WTC11 (cell line): ENCODE measurements at regions of chr10 and their contacts with region 1.

Region 1: GRCh38 chr10:84537447-84537931 is 209.1 kb downstream of the CCSER2 start:
- DNase-seq: peak; percentile 32
- ATAC-seq: peak; percentile 35
- H3K4me3 Mint-ChIP-seq: no peak overlapping the region
- H3K27ac Mint-ChIP-seq: no peak overlapping the region
- H3K4me1 Mint-ChIP-seq: peaks cover 40% of the 10 kb centered on the region
- H3K27me3 Mint-ChIP-seq: peaks cover 5% of the 10 kb centered on the region
- CTCF ChIP-seq: peak; percentile 62

Region 2: DNA sequence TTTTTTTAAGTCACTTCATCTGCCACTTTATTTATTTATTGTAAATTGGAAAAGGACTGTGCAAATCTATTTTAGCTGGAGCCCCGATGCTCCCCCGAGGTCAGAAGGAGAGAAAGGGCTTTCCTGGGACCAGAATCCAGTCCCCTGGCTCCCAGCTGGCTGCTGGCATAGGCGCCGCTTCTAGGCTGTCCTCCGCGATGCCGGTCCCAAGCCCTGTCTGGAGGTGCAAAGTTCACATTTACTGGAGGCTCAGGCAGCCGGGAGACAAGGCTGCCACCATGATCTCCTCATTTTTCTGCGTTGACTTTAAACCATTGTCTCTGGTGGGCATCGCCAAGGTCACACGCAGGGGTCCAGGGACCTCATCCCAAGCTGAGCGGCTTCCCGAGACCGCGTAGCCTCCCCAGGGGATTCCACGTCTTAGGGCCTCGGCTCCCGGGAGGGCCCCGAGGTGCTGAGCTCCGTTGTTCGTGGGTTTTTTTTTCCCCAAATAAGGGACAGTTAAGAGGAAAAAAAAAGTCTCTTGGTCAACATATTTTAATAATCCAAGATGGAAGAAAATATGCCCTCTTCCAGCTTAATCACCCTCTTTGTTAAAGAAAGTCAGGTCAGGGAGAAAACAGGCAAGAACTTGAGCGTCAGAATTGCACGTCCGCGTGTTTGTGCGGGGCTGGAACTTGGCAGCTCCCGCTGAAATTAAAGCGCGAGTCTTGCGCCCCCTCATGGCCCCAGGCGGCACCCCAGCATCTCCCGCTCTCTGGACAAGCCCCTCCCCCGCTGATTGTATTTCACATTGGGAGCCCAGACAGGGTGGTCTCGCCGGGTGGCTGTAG is 280.8 kb before region 1 on chr10:
- CTCF ChIA-PET with region 1: interaction called, 24 read pairs
- POLR2A ChIA-PET with region 1: no interaction called
- DNase-seq: peak; percentile 84
- ATAC-seq: peak; percentile 95
- H3K4me3 Mint-ChIP-seq: no peak overlapping the region
- H3K27ac Mint-ChIP-seq: no peak overlapping the region
- H3K4me1 Mint-ChIP-seq: 0 out of 2 replicates have a peak, but pooled peaks cover 3% of the 10 kb centered on the region
- H3K27me3 Mint-ChIP-seq: peaks cover 17% of the 10 kb centered on the region
- CTCF ChIP-seq: peak; percentile 76

Region 3: GRCh38 chr10:84352251-84352842 is 185.1 kb before region 1 on chr10:
- CTCF ChIA-PET with region 1: interaction called, 44 read pairs
- POLR2A ChIA-PET with region 1: interaction called, 6 read pairs
- DNase-seq: peak; percentile 82
- ATAC-seq: peak; percentile 93
- H3K4me3 Mint-ChIP-seq: no peak overlapping the region
- H3K27ac Mint-ChIP-seq: no peak overlapping the region
- H3K4me1 Mint-ChIP-seq: peaks cover 53% of the 10 kb centered on the region
- H3K27me3 Mint-ChIP-seq: no peaks in the 10 kb centered on the region
- CTCF ChIP-seq: peak; percentile 62; the same call in 1 of the 2 replicates

Region 4: GRCh38 chr10:84456126-84456525 is 81.4 kb before region 1 on chr10:
- CTCF ChIA-PET with region 1: no interaction called
- POLR2A ChIA-PET with region 1: no interaction called
- DNase-seq: no peak
- ATAC-seq: no peak
- H3K4me3 Mint-ChIP-seq: no peak overlapping the region
- H3K27ac Mint-ChIP-seq: no peak overlapping the region
- H3K4me1 Mint-ChIP-seq: peaks cover 4% of the 10 kb centered on the region; the same call in 1 of the 2 replicates
- H3K27me3 Mint-ChIP-seq: no peaks in the 10 kb centered on the region
- CTCF ChIP-seq: no peak

Region 5: DNA sequence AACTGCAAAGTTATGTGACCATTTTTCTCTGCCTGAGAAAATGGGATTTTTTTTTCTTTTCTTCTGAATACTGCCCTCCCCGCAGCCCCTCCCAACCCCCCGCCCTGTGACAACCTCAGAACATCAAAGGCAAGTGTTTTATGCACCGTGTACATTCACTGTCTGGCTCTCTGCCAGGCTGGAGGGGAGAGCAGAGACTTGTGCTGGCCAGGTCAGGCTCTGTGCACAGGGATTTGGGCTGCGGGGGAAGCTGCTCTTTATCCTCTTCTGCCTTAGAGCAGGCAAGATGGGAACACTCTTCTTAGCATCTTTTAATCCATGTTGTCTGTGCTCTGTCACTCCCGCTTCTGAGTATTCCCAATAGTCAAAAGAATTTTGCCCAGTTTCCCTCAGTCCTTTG is 14.0 kb before region 1 on chr10:
- CTCF ChIA-PET with region 1: interaction called, 11 read pairs
- POLR2A ChIA-PET with region 1: no interaction called
- DNase-seq: no peak
- ATAC-seq: peak; percentile 27; the same call in 1 of the 2 replicates
- H3K4me3 Mint-ChIP-seq: no peak overlapping the region
- H3K27ac Mint-ChIP-seq: no peak overlapping the region; the same call in 1 of the 2 replicates
- H3K4me1 Mint-ChIP-seq: peaks cover 36% of the 10 kb centered on the region
- H3K27me3 Mint-ChIP-seq: peaks cover 9% of the 10 kb centered on the region
- CTCF ChIP-seq: no peak

Region 6: DNA sequence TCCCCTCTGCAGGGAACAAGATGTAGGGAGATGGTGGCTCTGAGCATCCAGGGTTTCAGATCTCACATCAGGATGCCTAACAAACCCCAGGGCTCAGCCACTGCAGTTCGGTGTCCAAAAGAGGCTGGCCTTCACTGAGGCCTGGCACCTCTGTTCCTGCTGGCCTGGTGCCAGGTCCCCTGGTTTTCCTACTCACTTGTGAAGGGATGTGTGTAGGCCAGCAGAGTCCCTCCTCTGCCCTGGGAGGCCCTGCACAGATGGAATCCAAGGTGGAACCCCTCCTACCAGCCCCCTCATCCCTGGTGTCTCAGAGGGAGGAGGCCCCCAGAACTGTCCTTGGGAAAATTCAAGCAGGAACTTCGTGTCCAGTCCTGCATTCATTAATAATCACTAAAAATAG is 51.5 kb after region 1 on chr10:
- CTCF ChIA-PET with region 1: interaction called, 15 read pairs
- POLR2A ChIA-PET with region 1: interaction called, 3 read pairs
- DNase-seq: no peak
- ATAC-seq: no peak
- H3K4me3 Mint-ChIP-seq: no peak overlapping the region
- H3K27ac Mint-ChIP-seq: no peak overlapping the region
- H3K4me1 Mint-ChIP-seq: peaks cover 22% of the 10 kb centered on the region
- H3K27me3 Mint-ChIP-seq: peaks cover 19% of the 10 kb centered on the region
- CTCF ChIP-seq: no peak

Region 7: GRCh38 chr10:84762754-84763394 is 225.4 kb after region 1 on chr10:
- CTCF ChIA-PET with region 1: interaction called, 17 read pairs
- POLR2A ChIA-PET with region 1: no interaction called
- DNase-seq: peak; percentile 30
- ATAC-seq: peak; percentile 87
- H3K4me3 Mint-ChIP-seq: peak overlapping the region; percentile 59
- H3K27ac Mint-ChIP-seq: no peak overlapping the region; the same call in 1 of the 2 replicates
- H3K4me1 Mint-ChIP-seq: peaks cover 13% of the 10 kb centered on the region
- H3K27me3 Mint-ChIP-seq: peaks cover 3% of the 10 kb centered on the region; the same call in 1 of the 2 replicates
- CTCF ChIP-seq: no peak